ENCODE measurements at regions of chr20 and their contacts with region 1.

Region 1: DNA sequence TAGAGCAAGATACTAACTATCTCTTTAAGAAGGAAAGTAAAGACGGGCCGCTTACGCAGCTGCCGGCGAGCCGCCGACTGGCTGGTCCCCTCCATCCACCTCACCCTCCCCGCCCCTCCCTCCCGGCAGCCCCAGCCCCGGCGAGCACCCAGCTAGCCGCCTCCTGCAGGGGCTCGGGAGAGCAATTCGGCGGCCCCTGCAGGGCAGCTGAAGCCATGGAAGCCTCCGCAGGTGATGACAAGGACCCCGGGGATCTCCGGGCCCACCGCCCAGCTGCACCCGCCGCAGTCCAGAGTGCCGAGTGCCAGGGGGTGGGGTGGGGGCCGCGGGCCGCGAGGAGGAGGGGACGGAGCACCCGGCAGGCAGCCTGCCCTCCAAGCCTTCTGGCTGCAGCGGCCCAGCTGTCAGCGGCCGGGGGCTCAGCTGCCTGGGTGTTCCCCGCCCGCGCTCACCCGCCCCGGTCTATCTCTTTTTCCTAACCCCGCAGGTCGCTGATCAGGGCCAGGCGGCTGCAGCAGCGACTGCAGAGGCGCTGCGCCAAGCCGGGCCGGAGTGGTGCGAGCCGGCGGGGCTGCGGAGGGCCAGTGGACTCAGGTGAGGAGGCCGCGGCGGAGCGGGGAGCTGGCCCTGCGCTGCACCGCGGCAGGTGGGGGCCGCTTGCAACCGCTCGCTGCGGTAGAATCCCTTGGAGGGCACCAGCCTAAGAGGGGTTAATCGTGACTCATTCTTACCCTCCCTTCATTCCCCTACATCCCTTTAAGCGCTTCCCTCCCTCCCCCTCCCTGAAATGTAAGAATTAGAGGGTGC is at the start of gene SNPH:
- DNase-seq: peak; percentile 86
- H3K4me3 Mint-ChIP-seq: peak within 1 kb of the TSS; percentile 89
- H3K27ac Mint-ChIP-seq: peak within 1 kb of the TSS; percentile 85
- H3K4me1 Mint-ChIP-seq: peaks cover 42% of the 10 kb centered on the region
- H3K27me3 Mint-ChIP-seq: no peaks in the 10 kb centered on the region
- total RNA-seq, gene SNPH: 3.4 to 4.3 TPM

Region 2: DNA sequence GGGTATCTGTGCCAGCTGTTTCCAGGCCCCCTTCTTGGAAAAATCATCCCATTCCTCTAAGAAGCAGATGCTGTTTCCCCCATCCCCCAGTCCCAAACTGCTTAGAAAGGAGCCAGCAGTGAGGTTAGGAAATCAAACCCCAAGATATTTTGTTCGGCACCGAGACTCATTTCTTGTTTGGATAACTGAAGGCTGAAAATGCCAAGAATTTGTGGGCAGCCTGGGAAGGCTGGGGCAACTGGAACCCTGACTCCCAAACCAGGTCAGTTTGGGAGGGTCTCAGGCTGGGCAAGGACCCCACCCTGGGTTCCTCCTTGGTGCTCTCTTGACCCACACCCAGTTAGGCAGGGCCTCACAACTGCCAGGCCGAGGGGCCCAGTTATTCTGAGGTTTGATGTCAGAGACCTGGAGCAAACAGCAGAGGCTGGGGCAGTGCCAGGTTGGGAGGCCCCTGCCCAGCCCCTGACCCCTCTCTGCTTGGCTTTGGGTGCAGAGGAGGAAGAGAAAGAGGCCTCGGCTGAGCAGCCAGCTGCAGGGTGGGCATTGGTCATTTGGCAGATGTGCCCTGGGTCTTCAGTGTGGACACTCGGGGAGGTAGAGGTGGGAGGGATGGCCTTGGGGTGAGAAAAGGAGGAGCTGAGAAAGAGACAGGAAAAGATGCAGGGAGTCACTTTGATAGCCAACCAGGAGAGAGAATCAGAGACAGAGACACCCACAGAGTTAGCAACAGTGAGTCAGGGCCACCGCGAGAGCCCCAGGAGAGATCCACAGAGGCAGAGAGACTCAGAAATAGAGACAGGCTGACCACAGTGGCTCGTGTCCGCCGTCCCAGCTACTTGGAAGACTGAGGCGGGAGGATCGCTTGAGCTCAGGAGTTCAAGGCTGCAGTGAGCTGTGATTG is 355.2 kb before region 1 on chr20:
- CTCF ChIA-PET with region 1: no interaction called
- POLR2A ChIA-PET with region 1: no interaction called
- intact Hi-C with region 1: no loop called
- DNase-seq: no peak
- H3K4me3 Mint-ChIP-seq: no peak overlapping the region
- H3K27ac Mint-ChIP-seq: no peak overlapping the region
- H3K4me1 Mint-ChIP-seq: no peaks in the 10 kb centered on the region
- H3K27me3 Mint-ChIP-seq: no peaks in the 10 kb centered on the region

Region 3: GRCh38 chr20:1225783-1226654 is 40.4 kb before region 1 on chr20 and contains the start of gene RAD21L1:
- CTCF ChIA-PET with region 1: interaction called, 5 read pairs
- POLR2A ChIA-PET with region 1: no interaction called
- intact Hi-C with region 1: loop called (anchors 5 kb)
- DNase-seq: peak; percentile 89
- H3K4me3 Mint-ChIP-seq: peak within 1 kb of the TSS; percentile 79
- H3K27ac Mint-ChIP-seq: no peak within 1 kb of the TSS
- H3K4me1 Mint-ChIP-seq: peaks cover 9% of the 10 kb centered on the region
- H3K27me3 Mint-ChIP-seq: peaks cover 15% of the 10 kb centered on the region
- total RNA-seq, gene RAD21L1: not detected

Region 4: DNA sequence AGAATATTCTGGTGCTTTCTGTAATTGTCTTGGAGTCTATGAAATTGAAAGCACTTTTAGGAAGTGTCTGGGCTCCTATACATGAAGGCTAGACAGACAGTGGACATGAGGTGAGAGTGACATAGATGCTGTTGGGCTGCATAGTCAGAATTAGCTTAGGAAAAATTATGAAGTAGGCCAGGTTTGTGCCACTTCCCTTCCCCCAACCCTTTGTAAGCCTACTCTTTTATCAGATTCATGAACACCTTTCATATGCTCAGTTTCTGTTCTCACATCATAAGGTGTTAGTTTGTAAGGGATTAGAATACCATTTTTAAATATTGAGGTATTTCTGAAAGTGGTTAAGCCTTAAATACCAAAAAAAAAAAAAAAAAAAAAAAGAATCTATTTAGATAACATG is 18.7 kb before region 1 on chr20:
- CTCF ChIA-PET with region 1: no interaction called
- POLR2A ChIA-PET with region 1: no interaction called
- intact Hi-C with region 1: loop called (anchors 2 kb)
- DNase-seq: no peak
- H3K4me3 Mint-ChIP-seq: no peak overlapping the region
- H3K27ac Mint-ChIP-seq: no peak overlapping the region
- H3K4me1 Mint-ChIP-seq: peaks cover 6% of the 10 kb centered on the region
- H3K27me3 Mint-ChIP-seq: peaks cover 2% of the 10 kb centered on the region

Region 5: DNA sequence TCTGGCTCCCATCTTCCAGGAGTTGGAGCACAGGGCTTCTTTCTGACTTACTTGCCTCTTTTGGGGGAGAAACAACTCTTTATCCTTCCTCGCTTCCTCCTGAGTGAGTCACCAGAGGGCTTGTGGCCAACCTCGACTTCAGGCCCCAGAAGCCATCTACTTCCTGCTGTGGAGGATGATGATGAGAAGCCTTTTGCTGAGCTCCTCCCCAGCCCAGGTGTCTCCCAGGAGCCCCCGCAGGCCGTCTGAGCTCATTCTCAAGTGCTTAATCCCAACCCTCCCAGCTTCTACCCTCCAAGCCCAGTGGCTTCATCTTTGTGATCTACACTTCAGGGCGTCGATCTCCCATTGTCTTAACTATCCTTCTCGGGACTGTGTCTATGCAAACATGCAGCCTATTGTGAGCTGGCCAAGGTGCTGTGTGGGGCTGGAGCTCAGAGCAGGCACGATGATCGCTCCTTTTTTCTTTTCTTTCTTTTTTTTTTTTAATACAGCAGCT is 34.7 kb after region 1 on chr20:
- CTCF ChIA-PET with region 1: no interaction called
- POLR2A ChIA-PET with region 1: no interaction called
- intact Hi-C with region 1: loop called (anchors 2 kb)
- DNase-seq: peak; percentile 77
- H3K4me3 Mint-ChIP-seq: peak overlapping the region; percentile 14
- H3K27ac Mint-ChIP-seq: peak overlapping the region; percentile 73
- H3K4me1 Mint-ChIP-seq: peaks cover 16% of the 10 kb centered on the region
- H3K27me3 Mint-ChIP-seq: no peaks in the 10 kb centered on the region